Heart left ventricle (tissue), 16 donors: ENCODE measurements at regions of chr4 and their contacts with region 1.

Region 1: DNA sequence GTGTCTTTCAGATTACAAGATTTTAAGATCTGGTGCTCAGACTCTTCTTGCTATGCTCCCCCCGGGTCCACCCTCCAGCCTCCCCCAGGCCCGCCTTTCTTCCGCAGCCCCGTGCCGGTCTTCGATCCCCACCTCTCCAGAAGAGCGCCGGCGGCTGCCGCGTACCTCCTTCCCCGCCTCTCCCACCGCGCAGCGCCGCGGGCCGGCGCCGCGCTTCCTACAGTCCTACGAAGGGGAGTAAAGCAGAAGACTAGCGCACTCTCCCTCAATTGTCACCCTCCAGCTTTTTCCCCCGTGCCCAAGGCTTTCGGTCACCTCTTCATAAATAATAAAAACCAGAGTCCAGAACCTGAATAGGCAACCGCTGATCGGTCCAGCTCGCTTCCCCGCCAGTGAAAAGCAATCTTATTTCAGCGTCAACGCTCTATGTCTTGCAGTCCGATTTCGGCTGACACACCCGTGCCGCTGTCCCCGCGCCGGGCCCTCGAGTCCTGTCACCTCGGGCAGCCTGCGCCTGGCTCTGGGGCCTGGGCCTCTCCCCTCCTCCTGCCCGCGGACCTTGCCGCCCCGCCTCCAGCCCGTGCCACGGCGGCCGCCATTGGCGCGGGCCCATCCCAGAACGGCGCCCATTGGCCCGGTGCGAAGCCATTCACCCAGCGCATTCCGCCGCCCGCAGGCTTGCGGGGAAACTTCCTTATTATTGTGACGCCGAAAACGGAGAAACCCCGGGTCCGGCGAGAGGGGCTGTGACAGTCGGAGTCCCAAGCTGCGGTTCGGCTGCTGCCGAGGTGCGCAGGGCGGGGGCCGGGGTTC is at the start of gene HERC3:
- DNase-seq: peak; percentile 94 to 97 (median 95)
- ATAC-seq: peak; percentile 97 to 98 (median 98)
- H3K4me3 ChIP-seq: peak within 1 kb of the TSS; percentile 83 to 99 (median 96)
- H3K27ac ChIP-seq: peak within 1 kb of the TSS; percentile 89 to 99 (median 97)
- H3K4me1 ChIP-seq: peaks cover 0 to 43% (median 21%) of the 10 kb centered on the region in 12 donors
- H3K27me3 ChIP-seq: no peaks in the 10 kb centered on the region
- CTCF ChIP-seq: peak in 4 of 12 donors; percentile 14 to 29 (median 21)
- POLR2A ChIP-seq: peak in 1 of 2 donors; percentile 71
- total RNA-seq, gene HERC3: 32.2 to 66.6 (median 48.9) TPM

Region 2: DNA sequence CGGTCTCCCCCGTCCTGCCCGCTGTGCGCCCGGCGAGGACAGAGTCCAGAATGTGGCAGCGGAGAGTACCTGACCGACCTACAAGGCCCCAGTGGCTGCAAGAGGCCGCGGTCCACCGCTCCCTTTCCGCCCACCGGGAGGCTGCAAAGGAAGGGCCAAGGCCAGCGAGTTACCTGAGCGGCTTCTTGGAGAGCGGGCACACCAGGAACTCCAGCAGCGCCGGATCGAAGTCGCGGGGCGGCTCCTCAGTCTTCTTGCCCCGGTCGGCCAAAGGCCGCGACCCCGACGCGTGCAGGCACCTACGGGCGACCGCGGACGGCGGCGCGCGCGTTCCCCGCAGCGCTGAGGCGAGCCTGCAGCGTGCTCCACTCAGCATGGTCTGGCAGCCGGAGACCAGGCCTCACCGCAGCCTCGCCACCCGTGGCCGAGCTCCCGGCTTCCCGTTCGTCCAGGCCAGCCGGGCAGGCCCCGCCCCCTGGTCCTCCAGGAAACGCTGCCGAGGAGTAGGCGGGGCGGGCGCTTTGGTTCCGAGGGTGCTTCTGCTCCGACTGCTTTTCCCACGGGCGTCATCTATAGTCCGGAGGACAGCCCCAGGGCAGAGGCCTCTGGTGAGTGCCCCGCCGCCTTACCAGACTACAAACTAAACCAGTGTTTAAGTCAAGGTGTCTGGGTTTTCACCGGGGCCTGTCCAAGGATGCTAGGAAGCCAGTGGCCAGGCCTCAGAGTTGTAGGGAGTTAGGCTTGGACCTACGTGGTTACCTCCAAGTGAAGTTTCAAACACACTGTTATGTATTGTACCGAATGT is 68.5 kb before region 1 on chr4 and contains the start of gene PYURF:
- intact Hi-C with region 1: loop called in 2 of 10 experiments (anchors 5 kb)
- DNase-seq: peak; percentile 94 to 98 (median 97)
- ATAC-seq: peak; percentile 96 to 98 (median 98)
- H3K4me3 ChIP-seq: peak within 1 kb of the TSS; percentile 66 to 96 (median 90)
- H3K27ac ChIP-seq: peak within 1 kb of the TSS; percentile 60 to 94 (median 86)
- H3K4me1 ChIP-seq: peaks cover 0 to 45% (median 19%) of the 10 kb centered on the region in 12 donors
- H3K27me3 ChIP-seq: no peaks in the 10 kb centered on the region
- CTCF ChIP-seq: peak in 1 of 12 donors; percentile 5
- POLR2A ChIP-seq: peak; percentile 4 to 87
- total RNA-seq, gene PYURF: 46.3 to 63.6 (median 54.2) TPM

Region 3: GRCh38 chr4:88616275-88617150 is 24.5 kb after region 1 on chr4:
- intact Hi-C with region 1: loop called in 1 of 10 experiments (anchors 2 kb)
- DNase-seq: no peak
- ATAC-seq: peak in 1 of 4 donors; percentile 37
- H3K4me3 ChIP-seq: no peak overlapping the region
- H3K27ac ChIP-seq: peak overlapping the region in 4 of 12 donors; percentile 11 to 43 (median 26)
- H3K4me1 ChIP-seq: peaks cover 3 to 77% (median 42%) of the 10 kb centered on the region in 12 donors
- H3K27me3 ChIP-seq: no peaks in the 10 kb centered on the region
- CTCF ChIP-seq: no peak
- POLR2A ChIP-seq: no peak

Region 4: GRCh38 chr4:88659055-88659889 is 67.3 kb after region 1 on chr4:
- intact Hi-C with region 1: loop called in 6 of 10 experiments (anchors 1 to 10 kb)
- DNase-seq: peak in 3 of 5 donors; percentile 30 to 47 (median 34)
- ATAC-seq: peak; percentile 86 to 97 (median 96)
- H3K4me3 ChIP-seq: no peak overlapping the region
- H3K27ac ChIP-seq: peak overlapping the region in 4 of 12 donors; percentile 8 to 48 (median 30)
- H3K4me1 ChIP-seq: peaks cover 0 to 6% (median 0%) of the 10 kb centered on the region in 12 donors
- H3K27me3 ChIP-seq: no peaks in the 10 kb centered on the region
- CTCF ChIP-seq: peak; percentile 56 to 85 (median 77)
- POLR2A ChIP-seq: no peak

Region 5: DNA sequence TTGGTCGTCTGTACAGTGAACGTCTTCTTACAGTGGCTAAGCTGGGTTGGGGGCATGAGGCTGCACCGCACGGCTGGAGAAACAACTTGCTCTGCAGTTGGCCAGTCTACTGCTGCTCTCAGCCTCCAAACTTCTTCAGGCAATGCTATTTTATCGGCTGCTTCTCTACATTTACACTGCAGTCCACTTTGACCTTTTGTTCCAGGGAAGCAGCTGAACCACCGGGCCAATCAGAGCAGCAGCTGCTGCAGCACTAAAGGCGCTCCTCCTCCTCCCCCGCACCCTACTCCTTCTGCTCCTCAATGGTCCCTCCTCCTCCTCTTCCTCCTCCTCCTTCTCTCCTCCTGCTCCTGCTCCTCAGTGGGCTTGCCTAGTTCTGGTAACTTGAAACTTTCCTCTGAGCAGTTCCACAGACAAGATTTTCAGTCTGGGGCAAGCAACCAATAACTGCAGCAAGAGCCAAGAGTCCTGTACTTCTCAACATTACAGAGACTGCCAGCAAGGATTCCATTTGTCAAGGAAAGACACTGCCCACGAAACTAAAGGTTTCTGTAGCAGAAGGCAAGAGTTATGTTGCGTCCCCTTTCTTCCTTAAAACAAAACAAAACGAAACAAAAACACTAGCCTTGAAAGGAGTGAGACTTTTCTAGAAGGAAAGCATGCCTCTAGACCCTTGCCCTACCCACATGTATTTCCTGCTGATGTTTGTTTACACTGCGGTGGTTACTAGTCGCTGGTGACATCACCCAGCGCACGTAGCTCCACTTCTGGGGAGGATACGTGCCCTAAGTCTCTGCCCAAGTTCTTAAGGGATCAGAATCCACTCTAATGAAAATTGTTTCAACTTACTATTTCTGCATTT is 231.3 kb after region 1 on chr4:
- intact Hi-C with region 1: loop called in 1 of 10 experiments (anchors 10 kb)
- DNase-seq: peak; percentile 89 to 93 (median 89)
- ATAC-seq: peak; percentile 93 to 99 (median 97)
- H3K4me3 ChIP-seq: peak overlapping the region; percentile 39 to 83 (median 62)
- H3K27ac ChIP-seq: peak overlapping the region; percentile 73 to 93 (median 86)
- H3K4me1 ChIP-seq: peaks cover 0 to 51% (median 26%) of the 10 kb centered on the region in 12 donors
- H3K27me3 ChIP-seq: no peaks in the 10 kb centered on the region
- CTCF ChIP-seq: no peak
- POLR2A ChIP-seq: peak in 1 of 2 donors; percentile 63

Region 6: DNA sequence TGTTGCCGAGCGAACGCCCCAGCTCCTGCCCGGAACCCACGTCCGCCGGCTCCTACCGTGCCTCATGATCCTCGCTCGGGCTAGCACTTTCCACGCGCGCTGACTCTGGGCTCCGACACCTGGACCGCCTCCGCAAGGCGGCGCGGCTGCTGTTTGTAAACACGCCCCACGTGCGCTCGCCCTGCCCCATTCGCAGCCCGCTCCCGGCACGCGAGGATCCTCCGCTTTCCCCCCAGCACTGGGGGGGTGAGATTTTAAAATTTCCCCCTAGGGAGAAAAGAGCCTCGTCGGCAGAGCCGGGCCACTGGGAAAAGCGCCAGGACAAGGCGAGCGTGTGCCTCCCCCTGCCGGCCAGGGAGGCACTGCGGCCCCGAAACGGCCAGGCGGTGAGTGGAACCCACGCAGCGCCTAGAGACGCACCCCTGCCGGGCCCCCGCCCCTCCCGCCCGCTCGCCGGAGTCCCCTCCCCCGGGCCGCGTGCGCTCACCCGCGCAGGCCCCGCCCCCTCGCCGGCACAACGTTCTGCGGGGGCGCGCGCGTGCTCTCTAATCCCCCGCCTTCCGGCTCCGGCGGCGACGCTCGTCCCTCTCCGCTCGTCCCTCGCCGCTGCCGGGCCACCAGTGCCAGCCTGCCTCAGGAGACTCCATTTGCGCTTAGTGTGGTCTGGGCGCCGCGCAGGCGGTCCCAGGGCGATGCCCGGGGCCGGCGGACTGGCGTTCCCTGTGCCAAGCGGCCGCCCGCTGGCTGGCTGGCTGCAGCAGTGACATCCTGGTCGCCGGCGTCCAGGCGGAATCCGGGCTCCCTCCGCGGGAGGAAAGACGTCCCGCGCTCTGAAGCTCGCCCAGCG is 519.2 kb after region 1 on chr4 and contains the start of gene TIGD2:
- intact Hi-C with region 1: loop called in 1 of 10 experiments (anchors 10 kb)
- DNase-seq: peak; percentile 88 to 93 (median 91)
- ATAC-seq: peak; percentile 94 to 99 (median 98)
- H3K4me3 ChIP-seq: peak within 1 kb of the TSS; percentile 32 to 91 (median 78)
- H3K27ac ChIP-seq: peak within 1 kb of the TSS in 11 of 12 donors; percentile 65 to 91 (median 85)
- H3K4me1 ChIP-seq: peaks cover 0 to 27% (median 11%) of the 10 kb centered on the region in 12 donors
- H3K27me3 ChIP-seq: peaks cover 0 to 13% (median 0%) of the 10 kb centered on the region in 9 donors
- CTCF ChIP-seq: peak; percentile 68 to 98 (median 84)
- POLR2A ChIP-seq: peak in 1 of 2 donors; percentile 71
- total RNA-seq, gene TIGD2: 1.6 to 3.9 (median 2.3) TPM